HEK293T (cell line): ENCODE measurements at regions of chr6 and their contacts with region 1.

Region 1: GRCh38 chr6:70369332-70369950 is 43.9 kb upstream of the FAM135A start:
- DNase-seq: peak; percentile 74

Region 2: DNA sequence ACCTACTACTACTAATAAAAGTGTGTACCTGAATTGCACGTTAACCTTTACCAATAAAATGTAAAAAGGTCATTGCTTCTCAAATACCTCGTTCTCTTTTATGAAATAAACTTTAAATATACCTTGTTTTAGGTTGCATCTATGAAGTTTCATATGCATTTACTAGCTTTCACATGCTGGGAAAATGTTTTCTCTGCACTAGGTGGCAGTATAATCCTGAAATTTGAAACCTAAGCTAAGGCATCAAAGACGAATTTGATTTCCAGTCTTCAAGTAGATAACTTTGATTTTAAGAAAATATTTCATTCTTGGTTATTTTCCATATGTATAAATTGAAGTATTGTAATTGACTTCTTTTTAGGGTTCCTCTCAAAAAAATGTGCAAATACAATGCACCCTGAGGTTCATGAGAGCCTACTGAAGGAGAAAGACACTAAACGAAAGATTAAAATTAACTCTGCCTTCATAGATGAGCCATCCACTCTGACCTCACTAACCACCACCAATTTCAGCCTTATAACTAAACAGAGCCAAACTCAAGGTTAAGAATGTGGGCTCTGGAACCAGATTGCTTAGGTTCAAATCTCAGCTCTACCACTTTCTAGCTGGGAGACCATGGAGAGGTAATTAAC is 59.3 kb before region 1 on chr6:
- CTCF ChIA-PET with region 1: interaction called, 64 read pairs
- POLR2A ChIA-PET with region 1: no interaction called
- DNase-seq: peak; percentile 11

Region 3: DNA sequence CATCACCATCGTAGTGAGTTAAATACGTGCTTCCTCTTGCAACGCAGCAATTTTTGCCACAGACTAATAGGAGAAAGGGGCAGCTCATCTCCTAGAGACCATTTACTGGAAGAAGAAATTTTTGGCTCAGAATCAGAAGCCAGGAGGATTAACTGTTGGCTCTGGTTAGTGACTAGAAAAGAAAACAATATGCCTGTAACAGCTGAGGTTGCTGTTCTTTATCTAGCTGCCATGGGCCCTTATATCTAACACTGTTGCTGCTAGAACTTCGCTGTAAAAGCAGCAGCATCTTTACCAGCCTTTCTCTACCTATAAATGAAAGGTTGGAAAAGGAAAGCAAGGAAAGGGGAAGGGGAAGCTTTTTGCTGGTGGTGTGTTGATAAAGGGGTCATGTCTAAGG is 109.8 kb after region 1 on chr6:
- CTCF ChIA-PET with region 1: no interaction called
- POLR2A ChIA-PET with region 1: no interaction called
- DNase-seq: no peak